A549 (cell line): ENCODE measurements at regions of chr2 and their contacts with region 1.

Region 1: GRCh38 chr2:186503848-186504606 is 18.0 kb downstream of the ZC3H15 start:
- DNase-seq: peak in 1 of 2 experiments; percentile 37
- ATAC-seq: peak; percentile 80 to 82
- H3K4me3 ChIP-seq: no peak overlapping the region
- H3K27ac ChIP-seq: no peak overlapping the region
- H3K4me1 ChIP-seq: 0 out of 3 replicates have a peak, but pooled peaks cover 4% of the 10 kb centered on the region
- CTCF ChIP-seq: peak; percentile 81
- EP300 ChIP-seq: no peak
- POLR2A ChIP-seq: no peak
- RAD21 ChIP-seq: peak; percentile 83 to 88

Region 2: DNA sequence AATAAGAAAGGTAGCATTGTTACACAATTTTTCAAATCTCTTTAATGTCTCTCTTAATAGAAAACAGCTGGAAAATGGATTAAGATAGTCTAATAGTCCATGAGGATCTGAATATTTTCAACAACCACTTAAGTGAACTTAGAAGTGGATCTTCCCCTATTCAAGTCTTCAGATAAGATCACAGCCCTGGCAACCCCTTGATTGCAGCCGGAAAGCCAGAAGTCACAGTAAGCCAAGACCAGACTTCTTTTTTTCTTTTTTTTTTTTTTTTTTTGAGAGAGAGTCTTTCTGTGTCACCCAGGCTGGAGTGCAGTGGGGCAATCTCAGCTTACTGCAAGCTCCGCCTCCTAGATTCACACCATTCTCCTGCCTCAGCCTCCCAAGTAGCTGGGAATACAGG is 36.6 kb before region 1 on chr2:
- CTCF ChIA-PET with region 1: no interaction called
- POLR2A ChIA-PET with region 1: no interaction called
- DNase-seq: no peak
- ATAC-seq: no peak
- H3K4me3 ChIP-seq: no peak overlapping the region
- H3K27ac ChIP-seq: no peak overlapping the region
- H3K4me1 ChIP-seq: no peaks in the 10 kb centered on the region
- CTCF ChIP-seq: no peak
- EP300 ChIP-seq: no peak
- POLR2A ChIP-seq: no peak
- RAD21 ChIP-seq: no peak

Region 3: DNA sequence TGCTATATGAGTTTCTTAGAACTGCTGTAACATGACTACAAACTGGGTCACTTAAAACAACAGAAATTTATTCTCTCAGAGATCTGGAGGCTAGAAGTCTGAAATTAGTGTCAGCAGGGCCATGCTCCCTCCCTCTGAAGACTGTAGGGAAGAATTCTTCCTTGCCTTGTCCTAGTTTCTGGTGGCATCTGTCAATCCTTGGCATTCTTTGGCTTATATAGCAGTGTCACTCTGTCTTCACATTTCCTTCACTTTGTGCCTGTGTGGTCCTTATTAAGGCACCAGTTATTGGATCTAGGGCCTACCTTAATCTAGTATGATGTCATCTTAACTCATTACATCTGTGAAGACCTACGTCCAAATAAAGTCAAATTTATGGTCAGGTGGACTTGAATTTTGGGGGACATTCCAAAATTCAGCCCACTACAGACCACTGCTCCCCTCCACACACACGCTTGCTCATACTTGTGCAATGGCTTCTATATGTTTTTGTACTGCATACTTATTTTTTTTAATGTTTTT is 10.4 kb before region 1 on chr2:
- CTCF ChIA-PET with region 1: interaction called, 10 read pairs
- POLR2A ChIA-PET with region 1: no interaction called
- DNase-seq: no peak
- ATAC-seq: no peak
- H3K4me3 ChIP-seq: no peak overlapping the region
- H3K27ac ChIP-seq: no peak overlapping the region
- H3K4me1 ChIP-seq: peaks cover 13% of the 10 kb centered on the region; the same call in 2 of the 3 replicates
- CTCF ChIP-seq: no peak
- EP300 ChIP-seq: no peak
- POLR2A ChIP-seq: no peak
- RAD21 ChIP-seq: no peak

Region 4: DNA sequence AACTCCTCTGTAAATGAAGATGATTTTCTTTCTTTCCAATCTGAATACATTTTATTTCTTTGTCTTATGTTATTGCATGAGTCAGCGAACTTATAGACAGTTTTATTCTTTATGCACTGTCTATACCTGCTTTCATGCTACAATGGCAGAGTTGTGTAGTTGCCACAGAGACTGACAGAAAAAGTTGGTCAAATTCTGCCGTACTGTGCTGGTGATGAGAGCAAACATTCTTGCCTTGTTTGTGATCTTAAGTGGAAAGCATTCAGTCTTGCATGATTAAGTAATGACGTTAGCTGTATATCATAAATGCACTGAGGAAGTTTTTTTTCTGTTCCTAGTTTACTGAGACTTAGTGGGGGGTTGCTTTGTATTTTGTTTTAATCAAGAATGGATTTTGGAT is 14.9 kb after region 1 on chr2:
- CTCF ChIA-PET with region 1: interaction called, 13 read pairs
- POLR2A ChIA-PET with region 1: no interaction called
- DNase-seq: peak in 1 of 2 experiments; percentile 51
- ATAC-seq: peak; percentile 52 to 62; a peak in 4 of 6 replicates
- H3K4me3 ChIP-seq: no peak overlapping the region
- H3K27ac ChIP-seq: no peak overlapping the region
- H3K4me1 ChIP-seq: peaks cover 31% of the 10 kb centered on the region
- CTCF ChIP-seq: no peak
- EP300 ChIP-seq: no peak
- POLR2A ChIP-seq: no peak
- RAD21 ChIP-seq: no peak

Region 5: GRCh38 chr2:186648130-186648529 is 144.1 kb after region 1 on chr2:
- CTCF ChIA-PET with region 1: interaction called, 85 read pairs
- POLR2A ChIA-PET with region 1: no interaction called
- DNase-seq: no peak
- ATAC-seq: no peak
- H3K4me3 ChIP-seq: no peak overlapping the region
- H3K27ac ChIP-seq: no peak overlapping the region
- H3K4me1 ChIP-seq: peaks cover 4% of the 10 kb centered on the region; the same call in 2 of the 3 replicates
- CTCF ChIP-seq: no peak
- EP300 ChIP-seq: no peak
- POLR2A ChIP-seq: no peak
- RAD21 ChIP-seq: no peak